ENCODE measurements at regions of chr11 and their contacts with region 1.

Region 1: GRCh38 chr11:33329705-33330329 is 72.6 kb downstream of the HIPK3 start:
- DNase-seq: peak; percentile 71
- H3K4me3 ChIP-seq: no peak overlapping the region
- H3K27ac ChIP-seq: no peak overlapping the region
- H3K4me1 ChIP-seq: peaks cover 0 to 57% (median 46%) of the 10 kb centered on the region in 4 donors
- H3K27me3 ChIP-seq: no peaks in the 10 kb centered on the region
- CTCF ChIP-seq: peak; percentile 32 to 57 (median 53)
- EP300 ChIP-seq: no peak
- POLR2A ChIP-seq: no peak

Region 2: DNA sequence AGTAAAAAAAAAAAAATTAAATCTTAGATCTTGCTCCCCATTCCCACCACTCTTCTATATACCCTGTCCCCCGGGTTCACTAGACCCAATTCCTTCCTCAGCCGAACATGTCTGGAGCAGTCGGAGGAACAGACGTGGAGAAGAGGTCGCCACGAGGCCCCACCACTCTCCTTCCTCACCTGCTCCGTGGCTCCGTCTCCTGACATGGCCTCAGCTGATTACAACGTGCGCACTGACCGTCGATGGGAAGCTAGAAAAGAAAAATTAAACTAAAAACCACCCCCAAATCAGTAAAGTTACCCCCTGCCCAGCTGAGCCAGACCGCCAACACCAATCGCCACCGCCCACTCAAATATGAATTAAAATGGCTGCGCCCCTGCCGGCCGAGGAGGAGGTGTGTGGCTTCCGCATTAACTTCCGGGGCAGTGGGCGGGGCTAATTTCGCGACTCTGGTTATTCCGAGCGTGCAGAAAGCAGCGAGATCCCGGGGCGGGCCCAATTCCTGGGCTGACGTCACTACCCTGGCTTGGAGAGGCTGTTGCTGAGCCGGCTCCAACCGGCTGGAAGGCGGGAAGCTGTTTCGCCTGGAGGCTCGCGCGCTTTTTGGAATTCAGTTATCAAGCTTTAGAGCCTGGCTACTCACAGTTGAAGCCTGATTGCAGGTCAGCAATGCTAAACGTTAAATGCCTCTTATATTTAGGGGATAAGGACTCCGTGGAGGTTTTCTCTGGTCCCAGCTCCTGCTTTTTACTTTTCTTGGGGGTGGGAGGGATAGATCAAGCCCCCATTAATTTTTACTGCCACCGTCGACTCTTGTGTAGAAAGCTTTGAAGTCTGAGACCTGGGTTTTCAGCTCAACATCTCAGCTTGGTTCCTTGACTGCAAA is 168.5 kb before region 1 on chr11 and contains the start of gene CSTF3:
- intact Hi-C with region 1: loop called (anchors 2 kb)
- DNase-seq: peak; percentile 100
- H3K4me3 ChIP-seq: peak within 1 kb of the TSS; percentile 66 to 81 (median 78)
- H3K27ac ChIP-seq: peak within 1 kb of the TSS; percentile 80 to 84 (median 83)
- H3K4me1 ChIP-seq: peaks cover 0 to 35% (median 24%) of the 10 kb centered on the region in 4 donors
- H3K27me3 ChIP-seq: no peaks in the 10 kb centered on the region
- CTCF ChIP-seq: peak; percentile 12 to 87 (median 77)
- EP300 ChIP-seq: peak in 1 of 4 donors; percentile 37
- POLR2A ChIP-seq: peak; percentile 19 to 57
- total RNA-seq, gene CSTF3: 9.9 to 14.6 (median 11.6) TPM

Region 3: GRCh38 chr11:33606762-33607161 is 276.9 kb after region 1 on chr11:
- intact Hi-C with region 1: no loop called
- DNase-seq: no peak
- H3K4me3 ChIP-seq: no peak overlapping the region
- H3K27ac ChIP-seq: no peak overlapping the region
- H3K4me1 ChIP-seq: no peaks in the 10 kb centered on the region
- H3K27me3 ChIP-seq: no peaks in the 10 kb centered on the region
- CTCF ChIP-seq: no peak
- EP300 ChIP-seq: no peak
- POLR2A ChIP-seq: no peak

Measured in sigmoid colon (tissue), 7 donors.